A673 (cell line): ENCODE measurements at regions of chr1 and their contacts with region 1.

Region 1: DNA sequence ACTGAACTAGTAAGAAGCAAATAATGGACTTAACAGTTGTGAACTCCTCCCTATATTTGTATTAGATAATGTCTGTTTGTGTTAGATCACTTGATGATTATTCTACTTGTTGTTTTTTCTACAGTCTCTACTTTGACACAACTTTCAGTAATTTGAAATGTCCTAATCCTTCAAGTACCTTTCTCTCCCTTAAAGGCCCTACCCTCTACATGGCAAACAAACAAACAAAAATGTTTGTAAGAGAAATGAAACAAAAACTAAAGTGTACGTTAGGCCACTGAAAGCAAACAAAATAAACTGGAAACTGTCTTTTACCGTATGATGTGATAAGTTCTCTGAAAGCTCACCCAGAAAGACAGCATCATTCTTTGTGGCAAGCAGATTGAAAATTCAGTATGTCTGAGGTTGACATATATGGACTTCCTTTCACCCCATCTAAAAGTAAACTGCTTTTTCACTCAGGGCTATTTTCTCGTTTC is 255.9 kb upstream of the SNX7 start:
- DNase-seq: peak; percentile 40
- H3K4me3 ChIP-seq: no peak overlapping the region
- H3K27ac ChIP-seq: peak overlapping the region; percentile 49
- H3K4me1 ChIP-seq: peaks cover 48% of the 10 kb centered on the region
- H3K27me3 ChIP-seq: no peaks in the 10 kb centered on the region
- CTCF ChIP-seq: no peak

Region 2: DNA sequence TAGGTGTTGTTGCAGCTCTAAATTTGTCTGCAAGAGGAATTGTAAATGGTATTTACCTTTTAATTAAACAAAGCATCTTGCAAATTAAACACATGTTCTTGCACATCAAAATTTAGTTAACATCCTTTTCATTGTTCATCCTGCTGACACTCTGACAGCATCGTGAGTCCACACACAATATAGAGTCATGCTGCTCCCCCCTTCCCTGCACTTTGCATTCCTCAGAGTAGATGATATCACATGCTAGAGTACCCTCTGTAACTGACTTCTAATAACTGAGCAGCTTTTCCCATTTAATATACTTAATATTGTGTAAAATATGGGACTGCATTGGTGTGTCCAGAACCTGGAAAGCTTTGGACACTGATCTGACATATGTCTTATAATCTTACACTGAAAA is 346.0 kb before region 1 on chr1:
- CTCF ChIA-PET with region 1: no interaction called
- POLR2A ChIA-PET with region 1: no interaction called
- intact Hi-C with region 1: loop called (anchors 5 kb)
- DNase-seq: no peak
- H3K4me3 ChIP-seq: no peak overlapping the region
- H3K27ac ChIP-seq: no peak overlapping the region
- H3K4me1 ChIP-seq: no peaks in the 10 kb centered on the region
- H3K27me3 ChIP-seq: no peaks in the 10 kb centered on the region
- CTCF ChIP-seq: no peak

Region 3: GRCh38 chr1:98323906-98324358 is 81.7 kb before region 1 on chr1:
- CTCF ChIA-PET with region 1: no interaction called
- POLR2A ChIA-PET with region 1: no interaction called
- intact Hi-C with region 1: loop called (anchors 5 kb)
- DNase-seq: peak; percentile 97
- H3K4me3 ChIP-seq: no peak overlapping the region
- H3K27ac ChIP-seq: peak overlapping the region; percentile 94
- H3K4me1 ChIP-seq: peaks cover 55% of the 10 kb centered on the region
- H3K27me3 ChIP-seq: no peaks in the 10 kb centered on the region
- CTCF ChIP-seq: no peak